RWPE1 (cell line): ENCODE measurements at regions of chr3 and their contacts with region 1.

Region 1: GRCh38 chr3:185823078-185824044 is 1.5 kb downstream of the IGF2BP2 start:
- DNase-seq: peak; percentile 20
- H3K27ac ChIP-seq: peak overlapping the region; percentile 95
- CTCF ChIP-seq: no peak

Region 2: DNA sequence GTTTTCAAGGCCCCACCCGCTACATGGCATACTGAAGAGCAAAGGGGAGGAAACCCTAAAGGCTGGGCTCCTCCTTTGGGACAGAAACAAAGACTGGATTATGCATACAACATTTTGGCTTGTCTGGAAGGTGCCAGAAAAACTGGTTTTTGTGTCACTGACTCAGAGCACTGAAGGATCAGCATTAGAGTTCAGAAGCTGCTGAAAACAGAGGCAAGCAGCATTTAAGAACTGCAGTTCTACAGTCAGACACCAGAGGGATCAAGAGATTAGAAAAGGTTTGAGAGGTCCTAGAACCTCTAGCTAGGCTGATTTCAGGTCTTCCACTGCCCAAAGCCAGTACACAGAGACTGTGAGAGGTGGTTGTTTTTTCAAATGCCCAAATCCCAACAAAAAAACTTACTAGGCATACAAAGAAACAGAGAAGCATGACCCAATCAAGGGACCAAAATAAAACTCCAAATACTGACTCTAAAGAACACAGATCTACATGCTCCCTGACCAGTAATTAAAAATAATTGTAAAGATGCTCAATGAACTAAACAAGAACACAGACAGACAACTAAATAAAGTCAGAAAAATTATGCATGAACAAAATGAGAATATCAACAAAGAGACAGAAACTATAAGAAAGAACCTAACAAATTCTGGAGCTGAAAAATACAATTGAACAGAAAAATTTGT is 146.1 kb before region 1 on chr3:
- CTCF ChIA-PET with region 1: interaction called, 16 read pairs
- POLR2A ChIA-PET with region 1: no interaction called
- DNase-seq: peak; percentile 73
- H3K27ac ChIP-seq: no peak overlapping the region
- CTCF ChIP-seq: peak; percentile 63

Region 3: GRCh38 chr3:185807445-185808068 is 15.8 kb before region 1 on chr3:
- CTCF ChIA-PET with region 1: no interaction called
- POLR2A ChIA-PET with region 1: no interaction called
- DNase-seq: peak; percentile 35
- H3K27ac ChIP-seq: no peak overlapping the region
- CTCF ChIP-seq: no peak